K562 (cell line): ENCODE measurements at regions of chr2 and their contacts with region 1.

Region 1: GRCh38 chr2:201406077-201406662 is 45.1 kb downstream of the TRAK2 start:
- DNase-seq: peak; percentile 9 to 57 (median 18)
- ATAC-seq: peak; percentile 15
- H3K4me3 ChIP-seq: peak overlapping the region; percentile 37; the same call in 1 of the 2 replicates
- H3K27ac ChIP-seq: peak overlapping the region; percentile 75; the same call in 2 of the 3 replicates
- H3K4me1 ChIP-seq: peaks cover 11 to 18% of the 10 kb centered on the region in 2 experiments; a peak in 4 of 5 replicates
- H3K27me3 ChIP-seq: no peaks in the 10 kb centered on the region
- CTCF ChIP-seq: no peak
- EP300 ChIP-seq: peak; percentile 90
- POLR2A ChIP-seq: no peak
- RAD21 ChIP-seq: no peak

Region 2: GRCh38 chr2:201432038-201432620 is 26.0 kb after region 1 on chr2:
- CTCF ChIA-PET with region 1: no interaction called
- POLR2A ChIA-PET with region 1: interaction called, 4 read pairs
- in situ Hi-C with region 1: no loop called
- intact Hi-C with region 1: loop called (anchors 2 kb)
- DNase-seq: no peak
- ATAC-seq: no peak; the same call in 2 of the 3 replicates
- H3K4me3 ChIP-seq: no peak overlapping the region
- H3K27ac ChIP-seq: peak overlapping the region; percentile 20; the same call in 1 of the 3 replicates
- H3K4me1 ChIP-seq: peaks cover 6 to 18% of the 10 kb centered on the region in 2 experiments; a peak in 4 of 5 replicates
- H3K27me3 ChIP-seq: no peaks in the 10 kb centered on the region
- CTCF ChIP-seq: no peak
- EP300 ChIP-seq: no peak
- POLR2A ChIP-seq: no peak
- RAD21 ChIP-seq: no peak